Activated CD4-positive, alpha-beta T cell treated with anti-CD3 and anti-CD28 coated beads for 36 hours (primary cell): ENCODE measurements at regions of chr3 and their contacts with region 1.

Region 1: GRCh38 chr3:58568572-58569286 is 8.5 kb downstream of the FAM107A start:
- DNase-seq: peak; percentile 87
- ATAC-seq: peak; percentile 70
- H3K4me3 Mint-ChIP-seq: no peak overlapping the region
- H3K27ac Mint-ChIP-seq: no peak overlapping the region
- H3K4me1 Mint-ChIP-seq: peaks cover 4% of the 10 kb centered on the region
- H3K27me3 Mint-ChIP-seq: no peaks in the 10 kb centered on the region

Region 2: GRCh38 chr3:58556761-58557221 is 11.9 kb before region 1 on chr3:
- CTCF ChIA-PET with region 1: interaction called, 17 read pairs
- POLR2A ChIA-PET with region 1: no interaction called
- intact Hi-C with region 1: no loop called
- DNase-seq: no peak
- ATAC-seq: no peak
- H3K4me3 Mint-ChIP-seq: no peak overlapping the region
- H3K27ac Mint-ChIP-seq: no peak overlapping the region
- H3K4me1 Mint-ChIP-seq: no peaks in the 10 kb centered on the region
- H3K27me3 Mint-ChIP-seq: peaks cover 6% of the 10 kb centered on the region

Region 3: GRCh38 chr3:58585005-58585786 is 16.5 kb after region 1 on chr3:
- CTCF ChIA-PET with region 1: interaction called, 13 read pairs
- POLR2A ChIA-PET with region 1: no interaction called
- intact Hi-C with region 1: no loop called
- DNase-seq: peak; percentile 81
- ATAC-seq: peak; percentile 94
- H3K4me3 Mint-ChIP-seq: peak overlapping the region; percentile 73
- H3K27ac Mint-ChIP-seq: peak overlapping the region; percentile 61
- H3K4me1 Mint-ChIP-seq: peaks cover 19% of the 10 kb centered on the region
- H3K27me3 Mint-ChIP-seq: peaks cover 50% of the 10 kb centered on the region